GM10248 (cell line): ENCODE measurements at regions of chr10 and their contacts with region 1.

Region 1: GRCh38 chr10:79195091-79195923 is 126.5 kb downstream of the ZMIZ1 start:
- DNase-seq: peak; percentile 88
- CTCF ChIP-seq: peak; percentile 96

Region 2: GRCh38 chr10:78302989-78303854 is 892.1 kb before region 1 on chr10:
- CTCF ChIA-PET with region 1: interaction called, 11 read pairs
- POLR2A ChIA-PET with region 1: no interaction called
- DNase-seq: peak; percentile 97
- CTCF ChIP-seq: peak; percentile 71

Region 3: DNA sequence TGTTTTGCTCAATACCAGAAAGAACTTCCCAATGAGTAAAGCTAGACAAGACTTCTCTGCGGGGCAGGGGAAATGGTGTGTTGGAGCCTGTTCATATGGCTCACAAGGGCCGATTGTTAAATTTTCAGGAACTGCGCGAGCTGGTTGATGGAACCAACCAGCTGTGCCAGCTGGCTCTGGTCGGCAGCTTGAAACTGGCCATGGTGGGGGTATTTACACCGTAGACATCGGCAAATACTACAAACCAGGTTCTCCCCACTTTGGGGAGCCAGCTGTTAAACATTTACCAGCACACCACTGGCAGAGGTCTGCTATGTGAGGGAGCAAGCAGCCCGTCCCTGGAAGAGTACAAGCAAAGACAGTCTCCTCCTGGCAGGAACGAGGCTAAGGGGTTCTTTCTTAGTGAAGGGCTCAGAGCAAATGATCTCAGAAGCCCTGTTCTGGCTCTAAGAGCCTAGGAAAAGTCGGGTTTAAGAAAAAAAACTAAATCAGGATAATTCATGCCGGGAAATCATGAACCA is 135.4 kb before region 1 on chr10:
- CTCF ChIA-PET with region 1: interaction called, 10 read pairs
- POLR2A ChIA-PET with region 1: no interaction called
- DNase-seq: no peak
- CTCF ChIP-seq: no peak

Region 4: GRCh38 chr10:79155301-79156081 is 39.8 kb before region 1 on chr10:
- CTCF ChIA-PET with region 1: interaction called, 25 read pairs
- POLR2A ChIA-PET with region 1: no interaction called
- DNase-seq: no peak
- CTCF ChIP-seq: no peak

Region 5: DNA sequence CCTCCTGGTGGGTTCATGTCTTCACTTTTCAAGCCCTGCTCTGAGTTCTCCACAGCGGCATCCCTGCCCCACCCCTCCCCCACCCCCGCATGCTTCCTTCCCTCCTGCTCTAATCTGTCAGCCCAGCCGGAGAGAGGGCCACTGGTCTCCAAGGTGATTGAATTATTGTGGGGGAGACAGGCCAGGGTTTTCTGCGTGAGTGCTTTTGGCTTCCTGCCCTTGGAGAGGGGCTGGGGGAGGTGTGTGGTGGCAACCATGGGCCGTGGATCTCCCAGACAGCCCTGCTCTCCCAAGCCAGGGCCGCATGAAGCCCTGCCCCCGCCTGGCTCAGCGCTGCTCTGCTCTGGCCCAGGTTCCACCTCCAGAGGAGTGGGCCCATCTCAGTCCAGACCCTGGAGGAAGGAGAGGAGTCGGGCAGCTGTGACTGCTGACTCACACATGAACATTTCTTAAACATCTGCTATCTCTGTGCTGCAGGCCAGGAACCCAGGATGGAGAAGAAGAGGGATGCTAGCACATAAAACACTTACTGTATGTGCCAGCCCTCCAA is 16.6 kb before region 1 on chr10:
- CTCF ChIA-PET with region 1: interaction called, 23 read pairs
- POLR2A ChIA-PET with region 1: no interaction called
- DNase-seq: no peak
- CTCF ChIP-seq: no peak

Region 6: DNA sequence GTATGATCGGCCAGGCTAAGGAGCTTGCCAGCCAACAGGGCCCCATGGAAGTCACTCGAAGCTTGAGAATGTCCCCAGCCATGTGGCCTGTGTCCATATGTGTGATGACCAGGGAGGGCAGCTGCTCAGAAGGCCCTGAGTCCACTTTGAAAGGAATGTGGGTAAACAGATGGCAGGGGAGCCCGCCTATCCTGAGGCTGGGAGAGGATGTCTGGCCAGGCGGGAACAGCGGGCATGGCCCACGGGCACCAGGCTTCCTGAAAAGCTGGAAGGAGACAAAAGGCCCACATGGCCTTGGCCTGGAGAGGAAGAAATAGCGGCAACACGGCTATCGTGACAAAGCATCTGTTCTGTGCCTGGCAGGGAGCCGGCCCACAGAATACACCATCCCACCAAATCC is 14.0 kb after region 1 on chr10:
- CTCF ChIA-PET with region 1: interaction called, 51 read pairs
- POLR2A ChIA-PET with region 1: no interaction called
- DNase-seq: no peak
- CTCF ChIP-seq: no peak